AG04450 (cell line): ENCODE measurements at regions of chr6 and their contacts with region 1.

Region 1: DNA sequence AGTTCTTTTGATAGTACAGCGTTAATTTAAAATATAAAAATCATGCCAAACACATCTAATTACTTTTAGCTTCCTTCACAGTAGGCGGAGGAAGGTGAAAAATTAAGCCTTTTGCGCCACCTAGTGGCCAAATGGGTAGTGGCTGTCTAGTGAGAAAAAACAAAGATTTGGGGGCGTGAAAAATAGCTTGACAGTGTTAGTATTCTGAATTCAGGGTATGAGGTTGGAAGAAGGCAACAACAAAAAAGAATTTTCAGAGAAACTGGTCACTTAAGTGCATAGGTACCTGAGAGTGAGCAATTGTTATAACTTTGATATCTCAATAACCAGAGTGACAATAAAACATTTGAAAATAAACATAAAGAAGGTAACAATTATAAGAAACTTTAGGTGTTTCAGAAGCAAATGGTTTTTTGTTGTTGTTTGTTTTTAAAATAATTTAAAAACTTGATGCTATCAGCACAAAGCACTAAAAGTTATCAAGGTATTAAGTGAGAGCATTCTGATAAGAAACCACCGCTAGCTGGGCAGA is 14.3 kb downstream of the PSMB9 start:
- DNase-seq: no peak
- H3K4me3 ChIP-seq: no peak overlapping the region
- H3K27ac ChIP-seq: no peak overlapping the region
- H3K27me3 ChIP-seq: peaks cover 20% of the 10 kb centered on the region
- CTCF ChIP-seq: peak; percentile 89

Region 2: DNA sequence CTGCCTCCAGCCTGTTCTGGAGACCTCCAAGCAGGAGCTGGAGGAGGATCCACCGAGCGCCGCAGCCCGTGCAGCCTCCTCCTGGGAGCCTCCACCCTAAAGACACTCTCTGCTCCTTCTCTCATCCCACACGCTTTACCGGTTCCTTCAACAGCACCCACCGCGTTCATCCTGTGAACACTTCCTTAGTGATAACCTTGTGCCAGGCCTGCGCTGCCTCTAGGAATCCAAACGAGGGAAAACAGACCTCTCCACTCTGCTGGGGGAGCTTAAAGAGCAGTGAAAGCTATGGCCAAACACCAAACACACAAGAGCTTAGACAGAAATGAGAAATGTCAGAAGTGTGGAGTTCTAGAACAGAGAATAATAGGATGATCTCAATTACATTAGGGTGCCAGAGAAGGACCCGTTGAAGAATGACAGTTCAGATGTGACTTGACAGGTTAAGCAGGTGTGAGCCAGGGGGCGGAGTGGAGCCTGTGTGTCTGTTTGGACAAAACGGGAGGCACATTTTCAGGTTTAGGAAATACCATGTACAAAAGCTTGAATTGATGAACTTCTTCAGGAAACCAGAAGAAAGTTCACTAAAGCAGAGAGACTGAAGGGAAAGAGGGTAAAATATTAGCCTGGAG is 309.8 kb before region 1 on chr6:
- CTCF ChIA-PET with region 1: no interaction called
- POLR2A ChIA-PET with region 1: no interaction called
- DNase-seq: no peak
- H3K4me3 ChIP-seq: no peak overlapping the region
- H3K27ac ChIP-seq: no peak overlapping the region
- H3K27me3 ChIP-seq: no peaks in the 10 kb centered on the region
- CTCF ChIP-seq: no peak

Region 3: GRCh38 chr6:32785781-32786533 is 82.4 kb before region 1 on chr6:
- CTCF ChIA-PET with region 1: interaction called, 24 read pairs
- POLR2A ChIA-PET with region 1: no interaction called
- DNase-seq: no peak
- H3K4me3 ChIP-seq: no peak overlapping the region
- H3K27ac ChIP-seq: no peak overlapping the region
- H3K27me3 ChIP-seq: peaks cover 9% of the 10 kb centered on the region
- CTCF ChIP-seq: peak; percentile 66

Region 4: DNA sequence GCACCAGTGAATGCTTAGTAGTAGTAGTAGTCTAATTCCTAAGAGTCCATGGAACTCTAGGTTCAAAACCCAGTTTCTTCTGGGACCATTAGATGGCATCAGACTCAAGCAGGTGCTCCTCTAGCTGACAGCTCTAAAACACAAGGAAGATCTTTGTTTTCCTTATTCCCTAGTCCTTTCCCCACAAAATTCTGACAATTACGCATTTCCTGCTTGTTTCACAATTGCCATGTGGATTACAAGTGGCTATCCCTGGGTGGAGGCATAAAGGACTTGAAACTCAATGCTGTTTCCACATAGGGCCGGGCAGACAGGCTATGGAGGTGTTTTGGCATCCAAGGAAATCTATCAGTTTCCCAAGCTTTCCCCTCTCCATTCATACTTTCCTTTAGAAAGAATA is 42.4 kb before region 1 on chr6:
- CTCF ChIA-PET with region 1: interaction called, 87 read pairs
- POLR2A ChIA-PET with region 1: no interaction called
- DNase-seq: no peak
- H3K4me3 ChIP-seq: no peak overlapping the region
- H3K27ac ChIP-seq: no peak overlapping the region
- H3K27me3 ChIP-seq: no peaks in the 10 kb centered on the region
- CTCF ChIP-seq: peak; percentile 52

Region 5: DNA sequence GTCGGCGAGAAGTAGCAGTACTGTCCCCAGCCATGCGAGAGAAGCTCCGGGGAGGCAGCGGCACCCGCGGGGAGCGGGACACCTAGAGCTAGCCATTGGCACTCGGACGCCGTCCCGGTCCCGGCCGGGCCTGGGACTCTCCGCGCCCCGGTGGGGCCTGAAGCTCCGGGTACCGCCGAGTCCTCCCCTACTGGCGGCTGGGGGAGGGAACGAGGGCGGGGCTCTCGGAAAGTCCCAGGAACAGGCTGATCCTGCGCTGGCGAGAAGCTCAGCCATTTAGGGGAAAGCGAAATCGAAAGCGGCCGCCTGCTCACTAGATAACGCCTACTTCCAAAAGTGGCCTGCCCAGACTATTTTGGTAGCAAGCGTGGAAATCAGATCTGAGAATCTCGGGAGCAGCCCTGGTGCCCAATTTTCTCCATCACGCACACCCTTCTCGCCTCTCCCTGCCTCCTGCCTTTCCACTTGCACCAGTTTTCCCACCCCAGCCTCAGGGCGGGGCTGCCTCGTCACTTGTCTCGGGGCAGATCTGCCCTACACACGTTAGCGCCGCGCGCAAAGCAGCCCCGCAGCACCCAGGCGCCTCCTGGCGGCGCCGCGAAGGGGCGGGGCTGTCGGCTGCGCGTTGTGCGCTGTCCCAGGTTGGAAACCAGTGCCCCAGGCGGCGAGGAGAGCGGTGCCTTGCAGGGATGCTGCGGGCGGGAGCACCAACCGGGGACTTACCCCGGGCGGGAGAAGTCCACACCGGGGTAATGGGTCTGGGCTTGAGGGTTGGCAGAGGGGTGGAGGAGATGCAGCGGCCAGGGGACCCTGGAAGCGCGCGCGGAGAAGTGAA is 14.6 kb before region 1 on chr6 and contains the starts of genes PSMB9 and TAP1:
- CTCF ChIA-PET with region 1: interaction called, 153 read pairs
- POLR2A ChIA-PET with region 1: no interaction called
- DNase-seq: peak; percentile 73
- H3K4me3 ChIP-seq: peak within 1 kb of the TSS; percentile 86
- H3K27ac ChIP-seq: peak within 1 kb of the TSS; percentile 93
- H3K27me3 ChIP-seq: peaks cover 2% of the 10 kb centered on the region
- CTCF ChIP-seq: peak; percentile 68
- polyA plus RNA-seq, gene PSMB9: 34.8 and 38.4 TPM in 2 replicates
- polyA plus RNA-seq, gene TAP1: 38.6 and 43.6 TPM in 2 replicates

Region 6: GRCh38 chr6:32933636-32934085 is 65.3 kb after region 1 on chr6:
- CTCF ChIA-PET with region 1: interaction called, 24 read pairs
- POLR2A ChIA-PET with region 1: no interaction called
- DNase-seq: peak; percentile 56
- H3K4me3 ChIP-seq: no peak overlapping the region
- H3K27ac ChIP-seq: no peak overlapping the region
- H3K27me3 ChIP-seq: peaks cover 25% of the 10 kb centered on the region
- CTCF ChIP-seq: peak; percentile 82

Region 7: GRCh38 chr6:32984605-32985389 is 116.5 kb after region 1 on chr6:
- CTCF ChIA-PET with region 1: interaction called, 20 read pairs
- POLR2A ChIA-PET with region 1: no interaction called
- DNase-seq: peak; percentile 63
- H3K4me3 ChIP-seq: no peak overlapping the region
- H3K27ac ChIP-seq: no peak overlapping the region
- H3K27me3 ChIP-seq: peaks cover 3% of the 10 kb centered on the region
- CTCF ChIP-seq: peak; percentile 92

Region 8: GRCh38 chr6:33235221-33235634 is 366.9 kb after region 1 on chr6:
- CTCF ChIA-PET with region 1: no interaction called
- POLR2A ChIA-PET with region 1: no interaction called
- DNase-seq: no peak
- H3K4me3 ChIP-seq: no peak overlapping the region
- H3K27ac ChIP-seq: no peak overlapping the region
- H3K27me3 ChIP-seq: peaks cover 33% of the 10 kb centered on the region
- CTCF ChIP-seq: no peak